Mammary epithelial cell (primary cell): ENCODE measurements at regions of chr19 and their contacts with region 1.

Region 1: GRCh38 chr19:12806239-12807081 is at the start of gene RNASEH2A:
- DNase-seq: peak; percentile 87
- H3K4me3 ChIP-seq: peak within 1 kb of the TSS; percentile 50 to 93 (median 66)
- H3K27ac ChIP-seq: no peak within 1 kb of the TSS
- H3K4me1 ChIP-seq: peaks cover 16% of the 10 kb centered on the region
- H3K27me3 ChIP-seq: no peaks in the 10 kb centered on the region
- CTCF ChIP-seq: no peak
- total RNA-seq, gene RNASEH2A: 7.0 to 27.8 TPM

Region 2: DNA sequence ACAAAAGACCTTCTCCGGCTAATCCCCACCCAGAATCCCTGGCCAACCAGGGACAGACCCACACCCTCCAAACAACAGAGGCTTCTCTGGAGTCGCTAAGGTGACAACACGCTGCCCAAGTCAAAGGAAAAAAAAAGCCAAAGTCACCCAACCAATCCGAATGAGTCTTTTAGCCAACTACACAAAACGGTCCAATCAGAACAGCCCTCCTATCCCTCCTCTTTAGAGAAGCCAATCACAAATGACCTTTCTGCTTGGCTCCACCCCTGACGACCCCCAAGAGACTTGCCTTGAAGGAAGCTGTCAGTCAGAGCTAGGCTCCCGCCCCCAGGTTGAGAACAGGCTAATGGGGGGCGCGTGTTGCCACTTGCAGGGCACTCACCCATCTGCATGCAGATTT is 103.4 kb before region 1 on chr19:
- CTCF ChIA-PET with region 1: no interaction called
- dilution Hi-C with region 1: loop called (anchors 5 kb)
- in situ Hi-C with region 1: loop called in 1 of 2 experiments (anchors 5 kb)
- intact Hi-C with region 1: no loop called
- DNase-seq: peak; percentile 9
- H3K4me3 ChIP-seq: no peak overlapping the region
- H3K27ac ChIP-seq: no peak overlapping the region
- H3K4me1 ChIP-seq: no peaks in the 10 kb centered on the region
- H3K27me3 ChIP-seq: no peaks in the 10 kb centered on the region
- CTCF ChIP-seq: no peak

Region 3: DNA sequence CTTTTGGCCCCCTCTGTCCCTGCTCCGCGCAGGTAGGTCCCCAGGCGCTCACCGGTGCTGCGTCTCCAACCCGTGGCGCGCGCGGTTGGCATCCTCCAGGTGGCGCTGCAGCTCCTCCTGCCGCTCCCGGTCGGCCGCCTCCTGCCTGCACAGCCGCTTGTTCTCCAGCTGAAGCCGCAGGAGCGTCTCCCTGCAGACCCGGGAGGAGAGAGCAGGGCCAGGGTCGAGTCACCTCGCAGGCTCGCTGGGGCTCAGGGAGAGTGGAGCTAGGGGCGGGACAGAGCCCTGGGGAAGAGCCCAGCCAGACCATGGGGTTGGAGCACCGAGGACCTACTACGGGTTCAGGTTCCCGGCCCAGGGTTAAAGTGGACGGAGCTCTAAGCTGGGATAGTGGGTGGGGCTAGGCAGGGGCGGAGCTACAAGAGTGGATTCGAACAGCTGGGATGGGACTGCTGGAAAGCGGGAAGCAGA is 40.4 kb before region 1 on chr19:
- CTCF ChIA-PET with region 1: no interaction called
- dilution Hi-C with region 1: loop called (anchors 5 kb)
- in situ Hi-C with region 1: no loop called
- intact Hi-C with region 1: no loop called
- DNase-seq: peak; percentile 76
- H3K4me3 ChIP-seq: peak overlapping the region in 2 of 3 experiments; percentile 40 to 46
- H3K27ac ChIP-seq: no peak overlapping the region
- H3K4me1 ChIP-seq: no peaks in the 10 kb centered on the region
- H3K27me3 ChIP-seq: no peaks in the 10 kb centered on the region
- CTCF ChIP-seq: peak; percentile 29 to 67

Region 4: GRCh38 chr19:12828494-12828893 is 22.0 kb after region 1 on chr19:
- CTCF ChIA-PET with region 1: no interaction called
- dilution Hi-C with region 1: no loop called
- in situ Hi-C with region 1: no loop called
- intact Hi-C with region 1: loop called (anchors 2 kb)
- DNase-seq: no peak
- H3K4me3 ChIP-seq: no peak overlapping the region
- H3K27ac ChIP-seq: no peak overlapping the region
- H3K4me1 ChIP-seq: peaks cover 7% of the 10 kb centered on the region
- H3K27me3 ChIP-seq: no peaks in the 10 kb centered on the region
- CTCF ChIP-seq: no peak

Region 5: DNA sequence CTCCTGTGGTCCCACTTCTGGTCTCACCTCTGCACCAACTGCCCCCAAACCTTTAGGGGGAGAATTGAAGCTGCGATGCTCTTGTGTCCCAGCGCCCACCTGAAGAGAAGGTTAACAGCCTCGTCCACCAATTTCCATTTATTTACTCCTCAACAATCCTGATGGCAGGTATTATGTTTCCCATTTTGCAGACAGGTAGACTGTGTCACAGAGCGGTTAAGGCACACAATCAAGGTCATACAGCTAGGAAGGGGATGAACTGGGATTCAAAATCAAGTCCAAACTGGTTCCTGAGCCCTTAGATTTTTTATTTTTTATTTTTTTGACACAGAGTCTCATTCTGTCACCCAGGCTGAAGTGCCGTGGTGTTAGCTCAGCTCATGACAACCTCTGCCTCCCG is 68.6 kb after region 1 on chr19:
- CTCF ChIA-PET with region 1: no interaction called
- dilution Hi-C with region 1: loop called (anchors 5 kb)
- in situ Hi-C with region 1: no loop called
- intact Hi-C with region 1: no loop called
- DNase-seq: no peak
- H3K4me3 ChIP-seq: no peak overlapping the region
- H3K27ac ChIP-seq: no peak overlapping the region
- H3K4me1 ChIP-seq: peaks cover 10% of the 10 kb centered on the region
- H3K27me3 ChIP-seq: no peaks in the 10 kb centered on the region
- CTCF ChIP-seq: no peak

Region 6: GRCh38 chr19:12890787-12891552 is 84.5 kb after region 1 on chr19 and contains the start of gene GCDH:
- CTCF ChIA-PET with region 1: no interaction called
- dilution Hi-C with region 1: no loop called
- in situ Hi-C with region 1: no loop called
- intact Hi-C with region 1: loop called (anchors 1 kb)
- DNase-seq: peak; percentile 99
- H3K4me3 ChIP-seq: peak within 1 kb of the TSS; percentile 64 to 87 (median 84)
- H3K27ac ChIP-seq: peak within 1 kb of the TSS; percentile 37
- H3K4me1 ChIP-seq: peaks cover 8% of the 10 kb centered on the region
- H3K27me3 ChIP-seq: no peaks in the 10 kb centered on the region
- CTCF ChIP-seq: no peak
- total RNA-seq, gene GCDH: 25.2 to 31.5 TPM